A549 (cell line): ENCODE measurements at regions of chr1 and their contacts with region 1.

Region 1: GRCh38 chr1:231757101-231757404 is 130.5 kb downstream of the DISC1 start:
- DNase-seq: no peak
- ATAC-seq: peak; percentile 70 to 71; a peak in 4 of 6 replicates
- H3K4me3 ChIP-seq: no peak overlapping the region
- H3K27ac ChIP-seq: peak overlapping the region; percentile 36 to 51; a peak in 4 of 6 replicates
- H3K4me1 ChIP-seq: peaks cover 3% of the 10 kb centered on the region; the same call in 1 of the 3 replicates
- CTCF ChIP-seq: no peak
- EP300 ChIP-seq: no peak
- POLR2A ChIP-seq: no peak
- RAD21 ChIP-seq: peak in 1 of 2 experiments; percentile 1; a peak in 1 of 5 replicates

Region 2: GRCh38 chr1:231770506-231771175 is 13.6 kb after region 1 on chr1:
- CTCF ChIA-PET with region 1: interaction called, 39 read pairs
- POLR2A ChIA-PET with region 1: no interaction called
- DNase-seq: no peak
- ATAC-seq: no peak
- H3K4me3 ChIP-seq: no peak overlapping the region
- H3K27ac ChIP-seq: no peak overlapping the region
- H3K4me1 ChIP-seq: no peaks in the 10 kb centered on the region
- CTCF ChIP-seq: no peak
- EP300 ChIP-seq: no peak
- POLR2A ChIP-seq: no peak
- RAD21 ChIP-seq: no peak

Region 3: DNA sequence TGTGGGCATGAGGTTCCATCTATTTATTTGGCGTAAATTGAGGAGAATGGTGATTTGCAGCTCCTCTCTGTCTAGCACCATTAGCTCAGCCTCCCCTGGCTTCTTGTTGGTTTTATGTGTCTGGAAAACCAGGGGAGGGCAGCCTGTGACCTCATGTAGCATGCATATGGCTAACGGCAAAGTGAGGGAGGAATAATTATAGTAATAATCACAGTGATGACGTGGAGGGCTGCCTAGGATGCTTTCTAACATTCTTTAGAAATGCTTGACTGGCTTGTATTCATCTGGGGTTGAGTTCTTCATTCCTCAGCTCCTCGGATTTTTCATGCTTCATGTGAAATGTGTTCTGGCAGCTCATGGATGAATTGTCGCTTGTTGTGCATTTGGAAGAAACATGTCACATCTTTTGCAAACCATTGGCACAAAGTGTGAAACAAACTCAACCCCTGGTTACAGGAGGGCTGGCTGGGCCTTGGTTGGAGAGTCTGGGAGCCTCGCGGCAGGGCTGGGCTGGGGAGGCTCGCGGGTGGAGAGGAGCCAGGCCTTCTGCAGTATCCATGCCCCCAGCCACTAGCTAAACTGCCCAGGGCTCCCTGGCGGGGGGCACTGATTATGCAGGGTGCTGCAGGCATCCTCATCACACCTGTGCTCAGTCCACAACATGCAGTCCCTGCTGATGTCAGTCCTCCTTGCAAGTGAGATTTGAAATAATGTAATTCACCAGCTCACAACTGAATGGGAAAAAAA is 19.1 kb after region 1 on chr1:
- CTCF ChIA-PET with region 1: interaction called, 22 read pairs
- POLR2A ChIA-PET with region 1: no interaction called
- DNase-seq: no peak
- ATAC-seq: no peak
- H3K4me3 ChIP-seq: no peak overlapping the region
- H3K27ac ChIP-seq: no peak overlapping the region
- H3K4me1 ChIP-seq: no peaks in the 10 kb centered on the region; the same call in 2 of the 3 replicates
- CTCF ChIP-seq: no peak
- EP300 ChIP-seq: no peak
- POLR2A ChIP-seq: no peak
- RAD21 ChIP-seq: no peak

Region 4: DNA sequence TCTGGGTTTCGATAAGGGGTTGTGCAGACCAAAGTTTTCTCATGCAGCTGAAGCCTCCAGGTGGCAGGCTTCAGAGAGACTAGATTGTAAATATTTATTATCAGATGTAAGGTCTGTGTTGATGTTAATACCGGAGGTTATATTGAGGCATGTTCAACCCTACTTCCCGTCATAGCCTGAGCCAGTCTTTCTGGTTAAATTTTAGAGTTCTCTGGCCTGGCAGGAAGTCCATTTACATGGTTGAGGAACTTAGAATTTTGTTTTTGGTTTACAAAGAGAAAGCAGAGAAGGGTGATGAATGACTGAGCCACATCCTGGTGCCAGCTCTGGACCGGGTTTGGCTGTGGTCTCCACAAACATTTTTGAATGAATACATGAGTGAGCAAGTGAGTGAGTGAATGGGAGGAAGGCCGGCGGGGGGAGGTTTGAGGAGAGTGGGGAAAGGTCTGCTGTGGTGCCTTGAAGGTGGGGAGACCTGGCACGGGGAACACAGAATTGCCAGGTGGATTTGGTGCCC is 88.0 kb after region 1 on chr1:
- CTCF ChIA-PET with region 1: interaction called, 13 read pairs
- POLR2A ChIA-PET with region 1: no interaction called
- DNase-seq: no peak
- ATAC-seq: no peak
- H3K4me3 ChIP-seq: no peak overlapping the region
- H3K27ac ChIP-seq: peak overlapping the region in 1 of 2 experiments; percentile 19; a peak in 1 of 6 replicates
- H3K4me1 ChIP-seq: peaks cover 28% of the 10 kb centered on the region
- CTCF ChIP-seq: 0 out of 3 replicates have a peak, but pooled peaks have one; percentile 8
- EP300 ChIP-seq: no peak
- POLR2A ChIP-seq: no peak
- RAD21 ChIP-seq: no peak

Region 5: DNA sequence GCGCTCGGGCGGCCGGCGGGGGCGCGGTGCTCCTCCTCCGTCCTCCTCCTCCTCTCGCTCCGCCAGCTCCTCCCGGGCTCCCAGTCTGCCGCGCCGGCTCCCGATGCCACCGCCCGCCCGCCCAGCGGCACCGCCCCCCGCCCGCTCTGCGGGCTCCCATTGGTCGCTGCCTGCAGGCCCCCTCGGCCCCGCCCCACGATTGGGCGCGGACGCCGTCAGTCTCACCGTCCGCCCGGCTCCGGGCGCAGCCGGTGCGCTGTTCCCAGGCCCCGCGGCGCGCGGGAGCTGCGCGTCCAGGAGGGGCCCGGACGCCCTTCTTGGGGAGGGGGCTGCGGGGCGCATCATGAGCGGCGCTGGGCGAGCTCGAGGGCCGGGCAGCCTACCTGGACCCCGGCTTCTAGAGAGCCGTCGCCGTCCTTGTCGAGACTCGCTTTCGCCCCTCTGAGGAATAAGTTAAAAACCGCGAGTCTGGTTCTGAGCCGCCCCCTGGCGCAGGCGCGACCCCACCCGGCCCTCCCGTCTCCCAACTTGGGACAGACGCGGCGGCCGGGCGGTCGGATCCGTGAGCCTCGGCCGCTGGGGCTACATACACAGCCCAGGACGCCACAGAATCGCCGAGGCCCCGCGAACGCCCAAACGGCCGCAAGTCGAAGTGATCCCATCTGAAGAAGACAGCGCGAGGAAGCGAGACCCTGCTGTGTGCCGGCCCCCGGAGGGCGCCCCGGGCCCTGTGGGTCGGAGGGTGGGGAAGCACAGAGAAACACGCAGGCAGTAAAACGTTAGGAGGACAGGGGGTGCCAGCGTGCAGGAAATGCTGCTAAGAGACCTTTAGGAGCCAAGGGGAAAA is 873.2 kb after region 1 on chr1 and contains the start of gene SIPA1L2:
- CTCF ChIA-PET with region 1: interaction called, 19 read pairs
- POLR2A ChIA-PET with region 1: interaction called, 5 read pairs
- DNase-seq: peak; percentile 92 to 97
- ATAC-seq: peak; percentile 90 to 96
- H3K4me3 ChIP-seq: peak within 1 kb of the TSS; percentile 75
- H3K27ac ChIP-seq: peak within 1 kb of the TSS; percentile 88 to 96
- H3K4me1 ChIP-seq: peaks cover 16% of the 10 kb centered on the region; the same call in 2 of the 3 replicates
- CTCF ChIP-seq: peak; percentile 75
- EP300 ChIP-seq: no peak
- POLR2A ChIP-seq: peak; percentile 49
- RAD21 ChIP-seq: peak; percentile 89 to 92
- polyA plus RNA-seq, gene SIPA1L2: 16.4 and 16.9 TPM in 2 replicates